Dendritic cell treated with granulocyte-macrophage colony-stimulating factor and Interleukin-4, amounts not matched to agents 40 ng/mL and 50 ng/mL, for 4 days (primary cell): ENCODE measurements at regions of chr10 and their contacts with region 1.

Region 1: DNA sequence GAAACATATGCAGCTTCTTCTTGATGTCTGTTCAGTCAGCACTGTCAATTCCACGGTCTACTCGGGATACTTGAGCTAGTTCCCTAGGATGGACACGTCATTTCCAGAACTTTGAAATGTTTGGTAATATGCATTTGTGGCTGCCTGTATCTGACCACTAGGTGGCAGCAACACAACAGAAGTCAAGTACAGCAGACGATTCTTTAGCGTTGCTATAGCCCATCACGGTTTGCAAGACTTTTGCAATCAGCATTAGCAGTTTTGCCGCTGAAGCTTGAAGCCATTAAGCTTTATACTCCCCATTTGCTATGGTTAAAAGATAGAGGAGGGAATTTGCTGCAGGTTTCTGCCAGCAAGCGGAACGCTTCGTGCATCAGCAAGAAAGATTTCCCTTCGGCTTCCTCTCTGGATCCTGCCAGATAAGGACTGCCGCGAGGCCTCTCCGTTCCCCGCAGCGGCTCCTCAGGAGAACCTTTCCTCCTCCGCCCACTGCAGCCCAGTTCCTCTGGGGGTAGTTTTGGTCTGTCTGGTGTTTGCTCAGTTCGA is 63.5 kb downstream of the ABCC2 start:
- H3K4me3 Mint-ChIP-seq: peak overlapping the region; percentile 37
- H3K27ac Mint-ChIP-seq: no peak overlapping the region
- H3K4me1 Mint-ChIP-seq: peaks cover 32% of the 10 kb centered on the region
- H3K27me3 Mint-ChIP-seq: peaks cover 4% of the 10 kb centered on the region

Region 2: GRCh38 chr10:99966306-99966705 is 120.4 kb after region 1 on chr10:
- intact Hi-C with region 1: loop called (anchors 5 kb)
- H3K4me3 Mint-ChIP-seq: no peak overlapping the region
- H3K27ac Mint-ChIP-seq: no peak overlapping the region
- H3K4me1 Mint-ChIP-seq: peaks cover 19% of the 10 kb centered on the region
- H3K27me3 Mint-ChIP-seq: no peaks in the 10 kb centered on the region

Region 3: GRCh38 chr10:100046021-100046486 is 200.1 kb after region 1 on chr10:
- intact Hi-C with region 1: loop called (anchors 1 kb)
- H3K4me3 Mint-ChIP-seq: no peak overlapping the region
- H3K27ac Mint-ChIP-seq: no peak overlapping the region
- H3K4me1 Mint-ChIP-seq: peaks cover 5% of the 10 kb centered on the region
- H3K27me3 Mint-ChIP-seq: no peaks in the 10 kb centered on the region